BJ (cell line): ENCODE measurements at regions of chr16 and their contacts with region 1.

Region 1: GRCh38 chr16:57863434-57864160 is 61.3 kb upstream of the KIFC3 start:
- DNase-seq: peak; percentile 40
- H3K4me3 ChIP-seq: no peak overlapping the region
- H3K27me3 ChIP-seq: no peaks in the 10 kb centered on the region
- CTCF ChIP-seq: peak; percentile 77

Region 2: DNA sequence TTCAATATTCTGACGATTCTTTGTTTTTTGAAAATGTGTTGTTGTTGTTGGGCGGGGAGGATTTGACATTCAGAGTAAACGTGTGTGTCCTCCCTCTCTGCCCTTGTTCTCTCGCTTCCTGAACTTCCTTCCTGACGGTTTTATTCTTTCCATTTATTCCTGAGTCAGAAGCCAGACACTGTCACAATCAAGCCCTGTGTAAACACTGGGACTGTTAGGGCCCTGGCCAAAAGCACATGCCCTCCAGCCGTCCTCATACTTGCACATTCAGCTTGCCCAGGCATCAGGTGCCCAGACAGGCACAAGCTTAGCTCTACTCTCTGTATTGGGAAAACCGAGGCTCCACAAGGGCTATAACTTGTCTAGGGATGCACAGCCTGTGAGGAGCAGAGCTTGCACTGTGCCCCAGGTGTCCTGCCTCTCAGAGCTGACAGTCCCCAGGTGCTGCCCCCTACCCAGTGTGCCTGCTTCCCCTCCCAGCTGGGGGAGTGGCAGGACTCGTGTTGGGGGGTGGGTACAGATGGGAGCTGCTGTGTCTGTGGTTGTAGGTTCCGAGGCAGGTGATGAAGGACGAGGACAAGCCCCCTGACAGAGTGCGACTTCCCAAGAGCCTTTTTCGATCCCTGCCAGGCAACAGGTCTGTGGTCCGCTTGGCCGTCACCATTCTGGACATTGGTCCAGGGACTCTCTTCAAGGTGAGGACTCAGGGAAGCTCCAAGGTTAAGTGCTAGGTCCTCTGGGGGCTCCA is 185.8 kb before region 1 on chr16:
- CTCF ChIA-PET with region 1: no interaction called
- POLR2A ChIA-PET with region 1: no interaction called
- DNase-seq: no peak
- H3K4me3 ChIP-seq: no peak overlapping the region
- H3K27me3 ChIP-seq: peaks cover 19% of the 10 kb centered on the region
- CTCF ChIP-seq: no peak

Region 3: GRCh38 chr16:57711346-57712026 is 152.1 kb before region 1 on chr16:
- CTCF ChIA-PET with region 1: no interaction called
- POLR2A ChIA-PET with region 1: no interaction called
- DNase-seq: no peak
- H3K4me3 ChIP-seq: no peak overlapping the region
- H3K27me3 ChIP-seq: peaks cover 13% of the 10 kb centered on the region
- CTCF ChIP-seq: no peak

Region 4: GRCh38 chr16:57728336-57729181 is 135.0 kb before region 1 on chr16:
- CTCF ChIA-PET with region 1: no interaction called
- POLR2A ChIA-PET with region 1: no interaction called
- DNase-seq: no peak
- H3K4me3 ChIP-seq: no peak overlapping the region
- H3K27me3 ChIP-seq: peaks cover 2% of the 10 kb centered on the region; the same call in 1 of the 2 replicates
- CTCF ChIP-seq: no peak

Region 5: GRCh38 chr16:57757326-57757786 is 106.2 kb before region 1 on chr16:
- CTCF ChIA-PET with region 1: interaction called, 32 read pairs
- POLR2A ChIA-PET with region 1: no interaction called
- DNase-seq: no peak
- H3K4me3 ChIP-seq: no peak overlapping the region
- H3K27me3 ChIP-seq: no peaks in the 10 kb centered on the region
- CTCF ChIP-seq: peak; percentile 99

Region 6: DNA sequence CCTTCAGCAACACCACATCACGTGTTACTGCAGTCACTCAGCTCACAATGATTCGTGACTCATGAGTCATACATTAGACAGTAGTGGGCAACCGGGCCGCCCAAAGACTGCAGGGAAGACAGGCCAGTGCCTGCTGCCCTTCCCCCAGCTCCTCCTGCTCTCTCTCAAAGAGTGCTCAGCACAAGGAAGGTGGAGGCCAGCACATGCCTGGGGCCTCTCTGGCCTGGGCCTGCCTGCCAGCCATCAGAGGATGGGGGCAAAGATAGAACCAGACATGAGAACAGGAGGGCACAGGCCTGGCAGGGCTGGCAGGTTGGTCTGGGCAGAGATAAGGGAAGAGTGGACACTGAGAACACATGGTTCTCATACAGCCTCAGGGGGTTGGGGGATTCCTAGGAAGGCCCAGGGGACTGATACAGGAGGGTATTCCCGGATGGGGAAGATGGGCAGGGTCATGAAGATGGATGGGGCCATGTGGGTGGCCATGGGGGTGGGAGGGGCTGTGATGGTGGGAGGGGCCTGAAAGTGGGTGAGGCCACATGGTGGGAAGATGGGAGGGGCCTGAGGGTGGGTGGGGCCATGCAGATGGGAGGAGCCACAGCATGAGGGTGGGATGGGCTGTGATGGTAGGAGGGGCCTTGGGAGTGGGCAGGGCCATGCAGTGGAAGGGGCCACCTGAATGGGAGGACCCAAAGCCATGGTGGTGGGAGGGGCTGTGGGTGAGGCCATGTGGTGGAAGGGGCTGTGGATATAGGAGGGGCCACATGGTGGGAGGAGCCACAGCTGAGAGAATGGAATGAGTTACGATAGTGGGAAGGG is 99.0 kb before region 1 on chr16:
- CTCF ChIA-PET with region 1: interaction called, 16 read pairs
- POLR2A ChIA-PET with region 1: no interaction called
- DNase-seq: peak; percentile 35
- H3K4me3 ChIP-seq: no peak overlapping the region
- H3K27me3 ChIP-seq: no peaks in the 10 kb centered on the region
- CTCF ChIP-seq: no peak

Region 7: DNA sequence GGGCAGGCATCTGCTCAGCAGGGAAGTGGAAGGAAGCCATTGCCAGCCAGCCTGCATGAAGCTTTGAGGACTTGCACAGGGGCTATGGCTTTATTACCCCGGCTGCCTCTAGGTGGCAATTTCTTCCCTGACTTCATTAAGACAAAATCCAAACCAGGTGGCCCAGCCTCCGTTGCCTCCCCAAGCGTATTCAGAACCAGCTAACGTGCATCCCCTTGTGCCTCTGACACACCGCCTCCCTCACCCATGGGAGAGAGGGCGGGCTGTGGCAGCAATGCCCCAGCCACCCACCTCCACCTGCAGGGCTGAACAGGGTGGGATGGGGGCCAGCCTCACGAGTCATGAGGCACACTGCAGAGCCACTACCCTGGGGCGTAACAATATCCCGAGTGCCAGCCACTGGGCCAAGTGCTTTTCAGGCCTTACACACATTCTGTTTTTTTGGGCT is 68.1 kb before region 1 on chr16:
- CTCF ChIA-PET with region 1: interaction called, 25 read pairs
- POLR2A ChIA-PET with region 1: no interaction called
- DNase-seq: no peak
- H3K4me3 ChIP-seq: no peak overlapping the region
- H3K27me3 ChIP-seq: no peaks in the 10 kb centered on the region
- CTCF ChIP-seq: peak; percentile 48

Region 8: DNA sequence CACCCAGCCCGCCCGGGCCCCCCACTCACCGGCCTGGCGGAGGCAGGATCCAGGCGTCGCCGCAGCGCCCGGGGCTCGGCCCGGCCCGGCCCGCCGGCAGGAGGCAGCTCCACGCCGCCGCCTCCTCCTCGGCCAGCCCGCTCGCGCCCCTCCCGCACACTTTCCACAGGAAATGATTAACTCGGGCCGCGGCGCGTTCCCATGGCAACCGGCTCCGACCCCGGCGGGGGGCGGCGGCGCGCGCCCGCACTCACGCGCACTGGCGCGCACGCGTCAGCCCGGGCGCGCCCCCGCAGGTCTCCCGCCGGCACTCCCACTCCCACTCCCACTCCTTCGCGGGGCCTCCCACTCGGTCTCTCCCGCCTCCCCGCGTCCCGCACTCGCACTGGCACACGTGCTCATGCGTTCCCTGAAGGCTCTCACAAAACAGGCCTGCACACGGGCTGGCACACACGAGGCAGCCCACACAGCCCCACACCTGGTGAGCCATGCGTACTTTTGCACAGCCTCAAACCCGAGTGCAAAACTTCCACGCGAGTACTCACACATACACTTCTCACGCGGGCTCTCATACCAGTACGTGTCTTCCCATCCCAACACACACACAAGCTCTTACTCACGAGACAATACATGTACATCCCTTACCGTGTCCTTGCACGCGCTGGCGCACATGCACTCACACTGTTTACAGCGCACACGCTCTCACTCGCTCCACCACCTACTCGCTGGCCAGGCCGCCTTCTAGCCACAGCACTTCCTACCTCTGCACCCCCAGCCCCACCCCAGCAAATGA is 61.1 kb before region 1 on chr16 and contains the start of gene KIFC3:
- CTCF ChIA-PET with region 1: interaction called, 25 read pairs
- POLR2A ChIA-PET with region 1: no interaction called
- DNase-seq: no peak
- H3K4me3 ChIP-seq: peak within 1 kb of the TSS; percentile 68
- H3K27me3 ChIP-seq: no peaks in the 10 kb centered on the region
- CTCF ChIP-seq: no peak
- polyA plus RNA-seq, gene KIFC3: 35.3 and 60.5 TPM in 2 replicates

Region 9: DNA sequence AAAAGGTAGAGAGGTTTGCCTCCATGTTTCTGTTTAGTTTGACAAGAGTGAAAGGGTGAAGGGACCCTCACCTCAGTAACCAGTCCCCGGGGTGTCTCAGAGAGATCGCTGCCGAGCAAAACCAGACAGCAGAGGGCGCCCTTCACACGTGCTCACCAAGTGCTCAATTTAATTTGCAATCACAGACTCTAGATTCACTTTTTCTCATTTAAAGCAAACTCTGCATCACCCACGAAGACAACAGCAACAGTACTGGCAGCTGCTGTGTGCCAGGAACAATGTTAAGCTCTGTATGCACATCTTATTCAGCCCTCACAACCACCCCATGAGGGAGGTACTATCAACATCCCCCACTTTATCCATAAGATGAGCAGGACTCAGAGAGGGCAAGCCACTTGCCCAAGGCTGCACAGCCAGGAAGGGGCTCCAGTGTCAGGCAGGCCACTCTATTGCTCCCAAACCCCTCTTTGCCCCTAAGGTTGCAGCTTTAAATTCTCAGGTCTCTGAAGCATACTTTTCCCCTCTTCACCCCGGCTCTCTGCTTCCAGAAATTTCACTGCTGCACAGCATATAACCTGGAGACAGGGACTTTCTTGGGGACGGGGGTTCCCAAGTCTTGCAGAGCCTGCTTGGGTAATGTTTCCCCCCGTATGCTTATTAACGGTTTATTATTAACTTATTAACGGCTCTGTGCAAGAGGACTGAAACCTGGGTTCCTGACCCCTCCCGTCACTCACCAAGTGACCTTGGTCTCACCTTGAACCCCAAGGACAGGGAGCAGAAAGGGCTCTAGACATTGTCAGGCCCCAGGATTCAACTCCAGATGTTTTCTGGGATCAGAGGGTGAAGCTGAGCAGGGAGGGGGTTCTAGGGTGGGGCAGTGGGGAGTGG is 36.4 kb after region 1 on chr16:
- CTCF ChIA-PET with region 1: interaction called, 11 read pairs
- POLR2A ChIA-PET with region 1: no interaction called
- DNase-seq: no peak
- H3K4me3 ChIP-seq: no peak overlapping the region
- H3K27me3 ChIP-seq: peaks cover 2% of the 10 kb centered on the region; the same call in 1 of the 2 replicates
- CTCF ChIP-seq: peak; percentile 90

Region 10: GRCh38 chr16:57914240-57915173 is 50.9 kb after region 1 on chr16:
- CTCF ChIA-PET with region 1: no interaction called
- POLR2A ChIA-PET with region 1: no interaction called
- DNase-seq: no peak
- H3K4me3 ChIP-seq: no peak overlapping the region
- H3K27me3 ChIP-seq: no peaks in the 10 kb centered on the region; the same call in 1 of the 2 replicates
- CTCF ChIP-seq: no peak